ENCODE measurements at regions of chrX and their contacts with region 1.

Region 1: DNA sequence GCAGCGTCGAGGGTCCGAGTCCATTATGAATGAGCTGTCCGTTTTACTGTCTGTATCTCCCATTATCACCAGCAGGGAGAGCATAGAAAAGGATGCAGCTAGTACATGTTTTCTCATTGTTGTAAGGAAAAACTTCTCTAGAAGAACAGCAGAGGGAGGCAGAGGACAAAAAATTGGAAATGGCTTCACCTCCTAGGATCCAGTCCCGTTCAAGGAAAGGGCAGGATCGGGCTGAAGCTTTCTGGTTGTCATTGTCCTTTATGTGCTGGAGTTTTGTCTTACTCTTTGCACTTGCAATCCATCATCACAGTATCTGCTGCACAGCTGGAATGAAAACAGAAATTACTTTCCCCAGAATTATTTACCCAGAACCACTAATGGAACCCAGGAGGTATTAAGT is 14.7 kb downstream of the NDP start:
- DNase-seq: peak; percentile 55 to 85
- ATAC-seq: peak; percentile 97 to 99
- H3K4me3 ChIP-seq: no peak overlapping the region
- H3K27ac ChIP-seq: peak overlapping the region in 1 of 2 experiments; percentile 44; a peak in 1 of 6 replicates
- H3K4me1 ChIP-seq: no peaks in the 10 kb centered on the region
- CTCF ChIP-seq: peak; percentile 83
- EP300 ChIP-seq: no peak
- POLR2A ChIP-seq: no peak
- RAD21 ChIP-seq: peak; percentile 90 to 93

Region 2: GRCh38 chrX:43910012-43910411 is 48.5 kb before region 1 on chrX:
- CTCF ChIA-PET with region 1: no interaction called
- POLR2A ChIA-PET with region 1: no interaction called
- DNase-seq: peak in 1 of 2 experiments; percentile 5
- ATAC-seq: no peak
- H3K4me3 ChIP-seq: no peak overlapping the region
- H3K27ac ChIP-seq: no peak overlapping the region
- H3K4me1 ChIP-seq: no peaks in the 10 kb centered on the region
- CTCF ChIP-seq: no peak
- EP300 ChIP-seq: no peak
- POLR2A ChIP-seq: no peak
- RAD21 ChIP-seq: no peak

Region 3: DNA sequence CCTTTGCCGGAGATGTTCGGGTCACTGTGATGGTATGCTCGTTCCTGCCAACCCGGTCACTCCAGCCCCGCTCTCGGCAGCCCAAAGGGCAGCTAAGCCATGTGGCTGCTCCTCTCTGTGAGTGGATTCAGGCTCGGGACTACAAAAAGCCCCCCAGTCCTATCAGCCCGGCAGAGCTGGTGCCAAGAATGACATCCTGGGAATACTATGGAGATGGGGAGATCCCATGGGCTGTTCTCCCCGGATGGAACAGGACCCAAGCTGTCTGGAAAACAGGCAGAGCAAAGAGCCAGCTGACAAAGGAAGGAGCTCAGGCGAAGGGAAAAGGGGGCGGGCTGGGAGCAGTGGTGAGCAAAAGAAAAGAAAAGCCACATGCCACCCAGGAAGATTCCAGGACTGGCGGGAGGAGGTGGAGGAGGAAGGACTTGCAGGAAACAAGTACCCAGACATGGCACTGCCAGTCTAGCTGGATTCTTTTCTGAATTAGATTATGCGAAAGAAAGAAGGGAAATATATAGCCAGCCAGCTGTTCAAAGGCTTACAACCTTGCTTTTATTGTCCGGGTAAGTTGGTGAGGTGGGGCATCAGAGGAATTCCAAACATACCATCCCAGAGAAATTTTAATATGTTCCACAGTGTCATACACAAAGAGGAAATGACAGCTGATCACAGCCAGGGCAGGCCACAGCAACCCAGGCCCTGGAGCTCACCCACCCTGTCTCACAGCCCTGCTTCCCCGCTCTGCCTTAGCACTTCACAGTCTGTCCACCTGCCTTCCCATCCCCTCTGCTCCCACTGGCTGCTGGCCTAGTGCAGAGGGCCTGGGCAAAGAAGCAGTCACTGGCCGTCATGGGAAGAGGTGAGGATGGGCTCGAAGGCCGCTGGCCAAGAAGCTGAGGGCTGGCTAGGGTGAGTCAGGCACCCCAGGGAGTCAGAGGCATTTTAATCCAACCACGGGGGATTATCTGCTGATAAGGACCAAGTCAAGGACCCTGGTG is 11.3 kb after region 1 on chrX:
- CTCF ChIA-PET with region 1: interaction called, 18 read pairs
- POLR2A ChIA-PET with region 1: no interaction called
- DNase-seq: peak in 1 of 2 experiments; percentile 2
- ATAC-seq: peak; percentile 50 to 59; a peak in 4 of 6 replicates
- H3K4me3 ChIP-seq: no peak overlapping the region
- H3K27ac ChIP-seq: peak overlapping the region in 1 of 2 experiments; percentile 74; a peak in 3 of 6 replicates
- H3K4me1 ChIP-seq: peaks cover 12% of the 10 kb centered on the region; the same call in 2 of the 3 replicates
- CTCF ChIP-seq: no peak
- EP300 ChIP-seq: no peak
- POLR2A ChIP-seq: no peak
- RAD21 ChIP-seq: no peak

Region 4: DNA sequence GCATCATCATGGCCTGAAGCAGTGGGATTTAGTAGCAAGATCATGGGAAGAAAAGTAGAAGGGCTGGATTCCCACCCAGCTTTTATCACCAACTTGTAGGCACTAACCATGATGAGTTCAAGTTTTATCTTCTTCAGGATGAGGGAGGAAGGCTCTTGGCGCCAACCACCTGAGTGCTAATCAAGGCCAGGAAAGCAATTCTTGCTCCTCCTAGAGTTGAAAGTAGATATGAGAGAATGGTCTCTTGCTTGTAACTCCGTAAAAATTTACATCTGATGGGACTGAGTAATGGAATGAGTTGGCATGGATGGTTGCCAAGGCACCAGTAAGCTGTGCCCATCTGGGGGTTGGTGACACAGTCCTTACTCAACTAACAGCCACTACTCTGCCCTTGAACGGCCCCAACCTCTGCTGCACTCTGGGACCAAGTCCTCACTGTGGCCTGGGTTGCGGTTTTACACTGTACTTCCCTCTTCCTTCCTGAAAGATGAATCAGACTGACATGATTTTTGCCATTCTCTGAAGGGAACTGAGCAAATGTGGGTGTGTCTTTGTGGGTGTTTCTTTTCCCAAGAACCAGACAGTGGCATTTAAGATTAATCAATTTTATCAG is 54.1 kb after region 1 on chrX:
- CTCF ChIA-PET with region 1: interaction called, 15 read pairs
- POLR2A ChIA-PET with region 1: no interaction called
- DNase-seq: peak; percentile 31 to 77
- ATAC-seq: peak; percentile 95 to 100
- H3K4me3 ChIP-seq: no peak overlapping the region
- H3K27ac ChIP-seq: peak overlapping the region in 1 of 2 experiments; percentile 56; a peak in 3 of 6 replicates
- H3K4me1 ChIP-seq: 0 out of 3 replicates have a peak, but pooled peaks cover 12% of the 10 kb centered on the region
- CTCF ChIP-seq: no peak
- EP300 ChIP-seq: no peak
- POLR2A ChIP-seq: no peak
- RAD21 ChIP-seq: no peak

Region 5: GRCh38 chrX:44025555-44025954 is 67.0 kb after region 1 on chrX:
- CTCF ChIA-PET with region 1: interaction called, 24 read pairs
- POLR2A ChIA-PET with region 1: no interaction called
- DNase-seq: peak in 1 of 2 experiments; percentile 4
- ATAC-seq: no peak
- H3K4me3 ChIP-seq: no peak overlapping the region
- H3K27ac ChIP-seq: peak overlapping the region in 1 of 2 experiments; percentile 33; a peak in 1 of 6 replicates
- H3K4me1 ChIP-seq: no peaks in the 10 kb centered on the region
- CTCF ChIP-seq: no peak
- EP300 ChIP-seq: no peak
- POLR2A ChIP-seq: no peak
- RAD21 ChIP-seq: no peak

Region 6: GRCh38 chrX:44244008-44244407 is 285.5 kb after region 1 on chrX:
- CTCF ChIA-PET with region 1: interaction called, 64 read pairs
- POLR2A ChIA-PET with region 1: no interaction called
- DNase-seq: peak in 1 of 2 experiments; percentile 35
- ATAC-seq: no peak
- H3K4me3 ChIP-seq: no peak overlapping the region
- H3K27ac ChIP-seq: no peak overlapping the region
- H3K4me1 ChIP-seq: no peaks in the 10 kb centered on the region
- CTCF ChIP-seq: peak; percentile 54
- EP300 ChIP-seq: no peak
- POLR2A ChIP-seq: no peak
- RAD21 ChIP-seq: peak; percentile 68 to 74